ENCODE measurements at regions of chr6 and their contacts with region 1.

Region 1: GRCh38 chr6:17156112-17156921 is 54.5 kb downstream of the STMND1 start:
- DNase-seq: peak; percentile 15 to 61
- H3K4me3 ChIP-seq: no peak overlapping the region
- H3K27ac ChIP-seq: no peak overlapping the region
- H3K4me1 ChIP-seq: no peaks in the 10 kb centered on the region
- H3K27me3 ChIP-seq: no peaks in the 10 kb centered on the region
- CTCF ChIP-seq: peak in 2 of 3 experiments; percentile 71 to 72; a peak in 3 of 4 replicates
- EP300 ChIP-seq: no peak
- POLR2A ChIP-seq: no peak
- RAD21 ChIP-seq: peak; percentile 93 to 95

Region 2: GRCh38 chr6:17169291-17169690 is 13.0 kb after region 1 on chr6:
- CTCF ChIA-PET with region 1: interaction called, 12 read pairs
- POLR2A ChIA-PET with region 1: no interaction called
- DNase-seq: no peak
- H3K4me3 ChIP-seq: no peak overlapping the region
- H3K27ac ChIP-seq: no peak overlapping the region
- H3K4me1 ChIP-seq: peaks cover 0 to 3% (median 0%) of the 10 kb centered on the region in 4 experiments; a peak in 2 of 7 replicates
- H3K27me3 ChIP-seq: no peaks in the 10 kb centered on the region
- CTCF ChIP-seq: no peak
- EP300 ChIP-seq: no peak
- POLR2A ChIP-seq: no peak
- RAD21 ChIP-seq: no peak

Region 3: DNA sequence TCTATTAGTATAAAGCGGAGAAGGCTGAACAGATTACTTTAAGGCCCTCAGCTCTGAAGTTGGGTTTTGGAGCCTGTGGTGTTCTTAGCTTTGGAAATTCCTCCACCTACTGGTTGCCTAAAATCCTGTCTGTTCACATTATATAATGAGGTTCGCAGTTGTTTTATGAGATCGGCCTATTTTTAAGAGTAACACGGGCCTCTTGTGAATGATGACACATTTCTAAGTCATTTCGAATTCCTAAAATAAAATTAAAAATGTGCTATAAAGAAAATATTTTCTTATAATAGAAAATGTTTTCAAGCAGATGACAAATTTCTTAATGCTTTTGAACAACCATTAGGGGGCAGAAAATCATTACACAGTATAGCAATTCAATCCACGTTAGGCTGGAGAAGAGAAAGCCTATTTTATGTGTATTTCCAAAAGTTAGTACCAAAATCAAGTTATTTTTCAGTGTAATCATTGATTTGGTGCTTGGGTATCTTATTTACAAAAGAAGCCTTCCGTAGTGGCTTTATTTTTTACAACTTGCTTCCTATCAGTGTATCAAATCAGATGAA is 428.0 kb after region 1 on chr6:
- CTCF ChIA-PET with region 1: interaction called, 11 read pairs
- POLR2A ChIA-PET with region 1: no interaction called
- DNase-seq: no peak
- H3K4me3 ChIP-seq: no peak overlapping the region
- H3K27ac ChIP-seq: no peak overlapping the region
- H3K4me1 ChIP-seq: no peaks in the 10 kb centered on the region
- H3K27me3 ChIP-seq: no peaks in the 10 kb centered on the region; a peak in 1 of 7 replicates
- CTCF ChIP-seq: peak in 2 of 3 experiments; percentile 55 to 84; a peak in 3 of 4 replicates
- EP300 ChIP-seq: no peak
- POLR2A ChIP-seq: no peak
- RAD21 ChIP-seq: peak; percentile 88 to 92

Measured in H1 (cell line).